Heart right ventricle (tissue), 16 donors: ENCODE measurements at regions of chr21 and their contacts with region 1.

Region 1: DNA sequence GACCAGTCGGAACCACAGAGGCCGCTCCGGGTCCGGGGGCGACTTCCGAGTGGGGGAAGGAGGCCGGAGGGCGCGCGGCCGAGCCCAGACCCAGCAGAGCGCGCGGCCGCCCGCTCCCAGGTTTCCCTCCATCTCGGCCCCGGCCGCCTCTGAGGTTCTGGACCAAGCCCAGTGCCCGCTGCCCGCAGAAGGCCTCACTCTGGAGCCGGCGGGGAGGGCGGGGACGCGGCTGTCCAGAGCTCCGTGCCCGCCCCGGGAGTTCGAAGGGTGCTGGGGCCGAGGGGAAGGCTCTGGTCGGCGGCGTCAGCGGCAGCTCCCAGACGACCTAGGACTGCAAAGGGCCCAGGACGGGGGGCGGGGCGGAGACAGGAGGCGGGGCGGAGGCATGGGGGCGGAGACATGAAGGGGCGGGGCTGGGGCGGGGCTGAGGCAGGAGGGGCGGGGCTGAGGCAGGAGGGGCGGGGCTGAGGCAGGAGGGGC is 48.0 kb upstream of the SLC19A1 start:
- DNase-seq: peak; percentile 51 to 78
- ATAC-seq: peak; percentile 78 to 93 (median 86)
- H3K4me3 ChIP-seq: peak overlapping the region; percentile 32 to 62 (median 54)
- H3K27ac ChIP-seq: peak overlapping the region in 2 of 10 donors; percentile 31 to 37
- H3K4me1 ChIP-seq: peaks cover 0 to 19% (median 5%) of the 10 kb centered on the region in 9 donors
- H3K27me3 ChIP-seq: peaks cover 0 to 41% (median 33%) of the 10 kb centered on the region in 7 donors
- CTCF ChIP-seq: no peak

Region 2: DNA sequence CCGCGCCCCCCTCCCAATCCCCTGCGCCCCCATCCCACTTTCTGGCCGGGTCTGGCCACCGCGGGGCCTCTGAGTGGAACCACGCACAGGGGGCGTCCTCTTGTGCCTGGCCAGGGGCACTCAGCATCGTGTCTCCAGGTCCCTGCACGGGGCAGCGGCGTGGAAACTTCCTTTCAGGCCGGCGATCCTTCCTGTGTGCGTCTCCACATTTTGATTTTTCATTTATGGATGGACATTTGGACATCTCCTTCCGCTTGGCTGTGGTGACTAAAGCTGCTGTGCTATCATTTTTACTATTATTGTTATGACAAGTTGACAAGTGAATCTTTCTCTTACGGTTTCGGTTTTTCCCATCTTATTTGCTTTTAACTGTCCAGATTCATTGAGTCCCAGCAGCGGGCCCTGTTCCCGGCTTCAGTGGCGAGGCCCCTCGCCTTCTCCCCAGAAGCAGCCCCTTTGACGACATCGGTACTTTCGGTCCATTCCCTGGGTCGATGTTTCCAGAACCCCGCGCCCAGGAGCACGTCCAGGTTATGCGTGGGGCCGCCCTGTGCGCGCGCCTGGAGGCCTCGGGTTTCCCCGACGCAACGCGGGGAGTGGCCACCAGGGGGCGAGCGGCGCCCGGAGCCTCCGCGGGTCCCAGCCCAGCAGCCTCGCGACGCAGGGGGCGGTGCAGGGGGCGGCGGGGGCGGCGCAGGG is 35.7 kb before region 1 on chr21:
- intact Hi-C with region 1: loop called in 3 of 10 experiments (anchors 5 kb)
- DNase-seq: peak; percentile 73 to 90
- ATAC-seq: peak; percentile 68 to 87 (median 82)
- H3K4me3 ChIP-seq: peak overlapping the region in 9 of 10 donors; percentile 37 to 72 (median 56)
- H3K27ac ChIP-seq: peak overlapping the region in 4 of 10 donors; percentile 10 to 92 (median 60)
- H3K4me1 ChIP-seq: peaks cover 0 to 43% (median 6%) of the 10 kb centered on the region in 9 donors
- H3K27me3 ChIP-seq: peaks cover 0 to 18% (median 0%) of the 10 kb centered on the region in 7 donors
- CTCF ChIP-seq: peak; percentile 74 to 82 (median 78)

Region 3: GRCh38 chr21:45643021-45643980 is 53.0 kb after region 1 on chr21 and contains the start of gene PCBP3:
- intact Hi-C with region 1: loop called in 1 of 10 experiments (anchors 5 kb)
- DNase-seq: peak; percentile 96 to 98
- ATAC-seq: peak; percentile 89 to 97 (median 94)
- H3K4me3 ChIP-seq: peak within 1 kb of the TSS; percentile 21 to 59 (median 46)
- H3K27ac ChIP-seq: peak within 1 kb of the TSS in 3 of 10 donors; percentile 35 to 72 (median 62)
- H3K4me1 ChIP-seq: peaks cover 0 to 37% (median 8%) of the 10 kb centered on the region in 9 donors
- H3K27me3 ChIP-seq: peaks cover 5 to 46% (median 21%) of the 10 kb centered on the region in 7 donors
- CTCF ChIP-seq: no peak
- total RNA-seq, gene PCBP3: 0.25 to 11.3 (median 1.6) TPM